AG04450 (cell line): ENCODE measurements at regions of chr17 and their contacts with region 1.

Region 1: DNA sequence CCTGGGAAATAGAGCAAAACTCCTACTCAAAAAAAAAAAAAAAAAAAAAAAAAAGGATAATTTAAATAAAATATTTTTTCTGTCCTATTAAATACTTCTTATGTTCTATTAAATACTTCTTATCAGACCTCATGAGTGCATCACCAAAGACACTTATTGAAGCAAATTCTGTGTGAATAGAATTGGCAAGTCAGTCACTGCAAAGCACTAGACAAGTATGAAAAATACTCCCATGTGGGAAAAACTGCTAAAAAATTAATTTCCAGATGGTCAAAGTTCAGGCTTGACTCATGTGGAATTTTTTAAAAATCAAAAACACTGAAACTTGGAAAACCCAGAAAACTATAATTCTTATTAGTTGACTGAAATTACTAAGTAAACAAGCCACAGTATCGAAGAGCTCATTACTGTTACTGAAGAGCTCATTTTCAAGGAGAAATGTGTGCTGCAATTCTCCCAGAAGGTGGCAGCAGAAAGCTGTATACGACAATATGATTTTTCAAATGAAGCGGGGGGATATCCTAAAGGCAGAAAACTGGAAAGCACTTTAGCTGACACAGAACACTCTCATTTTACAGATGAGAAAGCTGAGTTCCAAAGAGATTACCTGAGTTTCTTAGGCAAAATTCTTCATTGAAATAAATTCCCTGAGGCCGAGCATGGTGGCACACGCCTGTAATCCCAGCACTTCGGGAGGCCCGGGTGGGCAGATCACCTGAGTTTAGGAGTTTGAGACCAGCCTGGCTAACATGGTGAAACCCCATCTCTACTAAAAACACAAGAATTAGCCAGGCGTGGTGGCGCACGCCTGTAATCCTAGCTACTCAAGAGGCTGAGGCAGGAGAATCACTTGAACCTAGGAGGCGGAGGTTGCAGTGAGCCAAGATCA is 15.9 kb upstream of the FBXO47 start:
- DNase-seq: peak; percentile 50
- H3K4me3 ChIP-seq: no peak overlapping the region
- H3K27ac ChIP-seq: no peak overlapping the region
- H3K27me3 ChIP-seq: no peaks in the 10 kb centered on the region
- CTCF ChIP-seq: peak; percentile 82

Region 2: GRCh38 chr17:38916771-38917170 is 66.3 kb before region 1 on chr17:
- CTCF ChIA-PET with region 1: no interaction called
- POLR2A ChIA-PET with region 1: no interaction called
- DNase-seq: no peak
- H3K4me3 ChIP-seq: no peak overlapping the region
- H3K27ac ChIP-seq: no peak overlapping the region
- H3K27me3 ChIP-seq: no peaks in the 10 kb centered on the region
- CTCF ChIP-seq: no peak

Region 3: GRCh38 chr17:38943607-38944006 is 39.5 kb before region 1 on chr17:
- CTCF ChIA-PET with region 1: interaction called, 13 read pairs
- POLR2A ChIA-PET with region 1: no interaction called
- DNase-seq: no peak
- H3K4me3 ChIP-seq: no peak overlapping the region
- H3K27ac ChIP-seq: no peak overlapping the region
- H3K27me3 ChIP-seq: no peaks in the 10 kb centered on the region
- CTCF ChIP-seq: no peak

Region 4: DNA sequence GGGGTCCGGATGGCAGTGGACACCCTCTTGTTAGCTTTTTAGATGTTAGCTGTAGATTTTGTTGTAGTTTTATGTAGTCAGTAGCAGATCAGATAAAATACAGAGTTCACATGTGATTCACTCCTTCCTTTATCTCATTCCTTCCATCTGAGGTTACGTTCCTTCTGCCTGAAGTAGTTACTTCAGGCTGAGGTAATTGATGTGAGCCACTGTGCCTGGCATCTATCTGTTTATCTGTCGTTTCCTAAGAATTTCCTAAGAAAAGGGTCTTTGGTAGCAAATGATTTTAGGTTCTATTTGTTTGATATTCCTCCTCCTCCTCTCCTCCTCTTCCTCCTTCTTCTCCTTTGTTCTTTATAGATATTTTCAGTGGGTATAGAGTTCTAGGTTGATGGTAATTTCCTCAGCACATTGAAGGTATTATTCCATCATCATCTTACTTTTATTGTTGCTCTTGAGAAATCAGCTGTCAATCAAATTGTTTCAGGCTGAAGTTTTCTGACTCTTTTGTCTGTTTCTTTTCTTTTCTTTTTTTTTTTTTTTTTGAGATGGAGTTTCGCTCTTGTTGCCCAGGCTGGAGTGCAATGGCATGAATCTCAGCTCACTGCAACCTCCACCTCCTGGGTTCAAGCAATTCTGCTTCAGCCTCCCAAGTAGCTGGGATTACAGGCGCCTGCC is 13.7 kb after region 1 on chr17:
- CTCF ChIA-PET with region 1: interaction called, 21 read pairs
- POLR2A ChIA-PET with region 1: no interaction called
- DNase-seq: no peak
- H3K4me3 ChIP-seq: no peak overlapping the region
- H3K27ac ChIP-seq: no peak overlapping the region
- H3K27me3 ChIP-seq: no peaks in the 10 kb centered on the region
- CTCF ChIP-seq: no peak

Region 5: DNA sequence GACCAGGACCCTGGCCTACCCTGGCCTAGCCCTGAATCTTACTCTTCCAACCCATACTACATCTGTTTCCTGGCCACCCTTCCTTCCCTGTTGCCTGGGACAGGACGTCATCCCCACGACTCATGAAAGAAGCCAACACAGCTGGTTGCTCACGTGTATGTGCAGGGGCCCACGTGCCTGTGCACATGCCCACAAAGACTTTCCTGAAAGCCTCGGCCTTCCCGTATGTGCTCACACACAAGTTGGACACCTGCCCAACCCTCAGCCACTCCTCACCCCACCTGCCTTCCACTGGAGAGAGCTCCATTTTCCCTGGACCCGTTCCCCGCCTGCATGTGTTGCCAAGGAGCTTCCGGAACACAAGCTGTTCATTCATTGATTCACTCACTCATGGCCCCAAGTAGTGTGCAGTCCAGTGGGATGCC is 161.3 kb after region 1 on chr17:
- CTCF ChIA-PET with region 1: interaction called, 367 read pairs
- POLR2A ChIA-PET with region 1: no interaction called
- DNase-seq: peak; percentile 84
- H3K4me3 ChIP-seq: no peak overlapping the region
- H3K27ac ChIP-seq: peak overlapping the region; percentile 52
- H3K27me3 ChIP-seq: peaks cover under 1% of the 10 kb centered on the region
- CTCF ChIP-seq: no peak

Region 6: GRCh38 chr17:39174907-39175694 is 192.0 kb after region 1 on chr17:
- CTCF ChIA-PET with region 1: interaction called, 70 read pairs
- POLR2A ChIA-PET with region 1: no interaction called
- DNase-seq: no peak
- H3K4me3 ChIP-seq: no peak overlapping the region
- H3K27ac ChIP-seq: no peak overlapping the region
- H3K27me3 ChIP-seq: no peaks in the 10 kb centered on the region
- CTCF ChIP-seq: peak; percentile 78